ENCODE measurements at regions of chr7 and their contacts with region 1.

Region 1: DNA sequence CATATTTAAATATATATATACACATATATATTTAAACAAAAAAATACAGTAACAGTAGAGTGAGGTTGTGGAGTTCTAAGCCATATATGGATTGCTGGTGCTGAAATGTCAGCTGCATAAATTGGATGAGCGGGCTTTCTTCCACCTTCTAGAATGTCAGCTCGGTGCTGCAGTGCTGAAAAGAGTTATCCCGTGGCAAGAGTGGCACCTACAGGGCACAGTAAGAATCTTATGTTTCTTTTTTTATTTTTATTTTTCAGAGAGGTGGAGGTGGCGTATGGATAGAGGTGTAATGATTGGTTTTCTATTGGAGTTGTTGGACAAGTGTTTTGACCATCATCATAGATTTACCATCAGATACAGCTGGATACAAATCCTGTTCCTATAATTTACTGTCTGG is 86.2 kb upstream of the DYNC1I1 start:
- DNase-seq: no peak
- H3K4me3 ChIP-seq: no peak overlapping the region
- H3K27ac ChIP-seq: no peak overlapping the region
- H3K4me1 ChIP-seq: peaks cover 12% of the 10 kb centered on the region
- H3K27me3 ChIP-seq: no peaks in the 10 kb centered on the region
- CTCF ChIP-seq: peak; percentile 29 to 50 (median 39)
- POLR2A ChIP-seq: no peak

Region 2: DNA sequence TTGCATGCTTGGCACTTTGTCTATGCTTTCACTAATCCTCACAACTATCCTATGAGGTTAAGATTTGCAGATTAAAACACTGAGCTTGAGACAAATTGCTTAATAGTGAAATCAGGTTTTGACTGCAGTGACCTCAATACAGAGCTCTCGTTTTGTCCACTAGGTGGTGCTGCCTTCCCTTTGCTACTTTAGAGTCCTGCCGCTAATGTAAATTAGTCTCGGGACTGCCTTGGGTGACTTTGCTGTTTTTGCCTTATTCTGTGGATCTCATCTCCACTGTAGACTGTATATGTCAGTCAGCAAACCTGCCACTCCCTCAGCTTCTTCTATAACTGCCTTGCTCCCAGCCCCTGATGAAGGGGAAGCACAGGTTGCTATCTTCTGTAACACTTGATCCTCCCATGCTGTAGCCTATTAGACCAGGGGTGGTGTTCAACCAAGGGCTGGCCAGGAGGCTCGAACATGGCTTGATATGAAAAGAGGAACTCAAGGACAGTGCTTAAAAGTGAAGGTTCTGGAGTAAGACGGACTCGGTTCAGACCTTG is 174.3 kb before region 1 on chr7:
- intact Hi-C with region 1: loop called (anchors 5 kb)
- DNase-seq: no peak
- H3K4me3 ChIP-seq: no peak overlapping the region
- H3K27ac ChIP-seq: no peak overlapping the region
- H3K4me1 ChIP-seq: peaks cover 6% of the 10 kb centered on the region
- H3K27me3 ChIP-seq: no peaks in the 10 kb centered on the region
- CTCF ChIP-seq: peak; percentile 59 to 88 (median 77)
- POLR2A ChIP-seq: no peak

Region 3: DNA sequence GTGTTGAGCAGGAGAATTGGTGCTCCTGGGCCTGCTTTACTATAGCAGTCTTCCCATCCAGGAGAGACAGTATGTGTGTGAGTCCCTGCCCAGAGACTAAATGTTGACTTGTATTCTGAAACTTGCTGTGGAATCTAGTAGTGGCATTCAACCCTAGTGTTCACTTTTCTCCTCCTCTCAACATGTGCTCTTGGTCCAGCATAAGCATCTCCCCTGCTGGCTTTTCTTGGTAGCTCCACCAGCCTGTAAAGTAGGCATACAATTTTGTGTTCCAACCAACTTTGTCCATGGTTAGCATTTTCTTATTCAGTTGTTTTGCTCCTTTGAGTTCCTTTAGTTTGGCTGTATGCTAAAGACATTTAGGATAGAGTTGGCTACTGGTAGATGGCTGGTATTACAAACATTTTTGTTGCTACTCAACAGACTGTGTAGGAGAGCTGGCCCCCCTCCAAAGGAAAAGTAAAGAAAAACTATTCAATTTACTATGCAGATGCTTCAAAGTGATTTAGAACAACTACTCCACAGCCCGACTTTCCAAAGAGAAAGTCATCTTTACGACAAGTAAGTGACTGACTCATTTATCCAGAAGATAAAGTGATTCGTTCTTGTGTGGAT is 154.4 kb before region 1 on chr7:
- intact Hi-C with region 1: loop called (anchors 5 kb)
- DNase-seq: no peak
- H3K4me3 ChIP-seq: no peak overlapping the region
- H3K27ac ChIP-seq: no peak overlapping the region
- H3K4me1 ChIP-seq: no peaks in the 10 kb centered on the region
- H3K27me3 ChIP-seq: no peaks in the 10 kb centered on the region
- CTCF ChIP-seq: no peak
- POLR2A ChIP-seq: no peak

Region 4: DNA sequence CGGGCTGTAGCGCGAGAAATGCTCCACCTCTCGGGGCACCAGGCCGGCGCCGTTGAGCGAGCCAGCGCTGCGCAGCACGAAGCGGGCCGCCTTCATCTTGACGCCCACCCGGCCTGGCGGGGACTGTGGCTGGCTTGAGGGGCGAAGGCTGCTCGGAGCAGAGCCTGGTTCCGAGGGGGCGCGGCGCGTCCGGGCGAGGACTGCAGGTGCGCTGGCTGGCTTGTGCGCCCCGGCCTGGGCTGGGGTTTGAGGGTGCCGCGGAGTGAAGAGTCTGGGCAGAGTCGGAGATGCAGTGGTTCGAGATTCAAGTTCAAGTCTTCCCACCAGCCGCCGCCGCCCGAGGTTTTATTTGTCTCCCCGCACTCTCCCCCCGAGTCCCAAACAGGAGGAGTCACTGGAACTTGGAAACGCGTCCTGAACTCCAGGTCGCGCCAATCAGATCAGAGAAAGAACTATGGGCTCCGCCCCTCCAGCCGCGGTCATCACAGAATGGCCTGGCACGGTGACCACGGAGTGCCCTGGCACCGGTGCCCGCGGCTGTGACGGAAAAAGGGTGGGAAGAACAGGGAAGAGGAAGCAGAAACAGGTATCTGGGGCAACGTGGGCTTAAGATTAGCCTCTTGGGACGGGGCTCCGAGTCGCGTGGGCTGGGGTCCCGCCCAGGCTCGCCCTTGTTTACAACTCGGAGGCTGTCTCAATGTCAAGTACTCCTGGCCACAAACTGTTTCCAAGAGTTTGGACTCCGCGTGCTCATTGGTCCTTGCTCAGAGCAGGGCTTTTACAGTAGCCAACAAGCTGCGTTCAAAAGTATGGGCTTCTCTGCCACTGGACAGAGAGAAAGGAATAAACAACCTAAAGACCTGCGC is 89.7 kb before region 1 on chr7 and contains the start of gene PDK4:
- intact Hi-C with region 1: loop called (anchors 5 kb)
- DNase-seq: peak in 1 of 2 donors; percentile 98
- H3K4me3 ChIP-seq: peak within 1 kb of the TSS; percentile 75 to 96
- H3K27ac ChIP-seq: peak within 1 kb of the TSS; percentile 91
- H3K4me1 ChIP-seq: peaks cover 10% of the 10 kb centered on the region
- H3K27me3 ChIP-seq: no peaks in the 10 kb centered on the region
- CTCF ChIP-seq: no peak
- POLR2A ChIP-seq: peak in 1 of 2 donors; percentile 86
- total RNA-seq, gene PDK4: 399 TPM

Region 5: GRCh38 chr7:95871078-95871782 is 185.1 kb after region 1 on chr7:
- intact Hi-C with region 1: no loop called
- DNase-seq: no peak
- H3K4me3 ChIP-seq: no peak overlapping the region
- H3K27ac ChIP-seq: no peak overlapping the region
- H3K4me1 ChIP-seq: no peaks in the 10 kb centered on the region
- H3K27me3 ChIP-seq: no peaks in the 10 kb centered on the region
- CTCF ChIP-seq: peak in 2 of 3 experiments; percentile 59 to 69
- POLR2A ChIP-seq: no peak

Region 6: GRCh38 chr7:96135271-96135670 is 449.2 kb after region 1 on chr7:
- intact Hi-C with region 1: no loop called
- DNase-seq: no peak
- H3K4me3 ChIP-seq: no peak overlapping the region
- H3K27ac ChIP-seq: no peak overlapping the region
- H3K4me1 ChIP-seq: no peaks in the 10 kb centered on the region
- H3K27me3 ChIP-seq: no peaks in the 10 kb centered on the region
- CTCF ChIP-seq: no peak
- POLR2A ChIP-seq: no peak